ENCODE measurements at regions of chr7 and their contacts with region 1.

Region 1: DNA sequence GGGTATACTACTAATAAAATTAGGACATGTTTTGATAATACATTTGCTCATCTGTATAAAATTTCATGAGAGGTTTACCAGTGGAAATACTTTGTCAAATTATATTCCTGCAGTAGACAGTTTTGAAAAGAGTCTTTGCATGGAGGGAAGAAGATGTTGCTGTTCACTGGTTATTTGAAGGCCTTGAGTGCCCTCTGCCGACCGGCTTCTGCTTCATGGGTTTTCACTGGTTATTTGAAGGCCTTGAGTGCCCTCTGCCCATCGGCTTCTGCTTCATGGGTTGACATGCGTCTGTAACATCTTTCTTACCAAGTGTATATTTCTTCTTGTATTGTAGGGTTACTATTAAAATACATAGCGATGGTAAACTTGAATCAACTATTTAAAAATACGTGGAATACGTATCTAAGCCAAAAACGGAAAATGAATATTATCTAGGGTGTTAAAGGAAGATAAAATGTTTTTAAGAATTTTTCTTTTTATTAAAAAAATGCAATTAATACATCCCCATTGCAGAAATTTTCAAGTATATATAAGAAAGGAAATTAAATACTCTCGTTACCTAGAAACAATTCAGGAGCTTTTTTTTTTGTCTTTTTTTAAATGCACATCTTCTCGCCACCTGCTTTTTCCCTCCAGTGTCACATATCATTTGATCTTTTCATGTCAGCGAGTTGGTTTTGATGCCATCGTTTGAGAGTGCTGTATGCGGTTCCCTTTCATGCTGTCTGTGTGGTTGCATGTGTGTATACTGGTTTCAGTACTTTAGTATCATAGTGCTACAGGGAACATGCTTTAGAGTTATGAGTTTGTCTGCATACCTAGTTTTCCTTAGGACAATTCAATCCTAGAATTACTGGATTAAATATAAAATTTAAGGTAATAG is 73.4 kb downstream of the SHH start:
- DNase-seq: peak; percentile 86
- H3K4me3 ChIP-seq: no peak overlapping the region
- H3K27ac ChIP-seq: no peak overlapping the region
- H3K4me1 ChIP-seq: peaks cover 0 to 53% (median 9%) of the 10 kb centered on the region in 6 donors
- H3K27me3 ChIP-seq: no peaks in the 10 kb centered on the region
- CTCF ChIP-seq: peak; percentile 34 to 79 (median 65)
- POLR2A ChIP-seq: no peak

Region 2: GRCh38 chr7:155598810-155599210 is 140.1 kb before region 1 on chr7:
- intact Hi-C with region 1: loop called (anchors 1 kb)
- DNase-seq: peak; percentile 94
- H3K4me3 ChIP-seq: no peak overlapping the region
- H3K27ac ChIP-seq: no peak overlapping the region
- H3K4me1 ChIP-seq: peaks cover 0 to 26% (median 5%) of the 10 kb centered on the region in 6 donors
- H3K27me3 ChIP-seq: peaks cover 0 to 40% (median 0%) of the 10 kb centered on the region in 7 donors
- CTCF ChIP-seq: peak; percentile 80 to 98 (median 95)
- POLR2A ChIP-seq: no peak

Measured in spleen (tissue), 13 donors.